ENCODE measurements at regions of chrX and their contacts with region 1.

Region 1: GRCh38 chrX:65513610-65514009 is 21.0 kb downstream of the LAS1L start:
- DNase-seq: no peak
- ATAC-seq: no peak
- H3K4me3 ChIP-seq: no peak overlapping the region
- H3K27ac ChIP-seq: no peak overlapping the region
- H3K4me1 ChIP-seq: no peaks in the 10 kb centered on the region
- CTCF ChIP-seq: no peak
- EP300 ChIP-seq: no peak
- POLR2A ChIP-seq: no peak
- RAD21 ChIP-seq: no peak

Region 2: GRCh38 chrX:65463550-65463949 is 50.1 kb before region 1 on chrX:
- CTCF ChIA-PET with region 1: no interaction called
- POLR2A ChIA-PET with region 1: no interaction called
- DNase-seq: no peak
- ATAC-seq: no peak
- H3K4me3 ChIP-seq: no peak overlapping the region
- H3K27ac ChIP-seq: no peak overlapping the region
- H3K4me1 ChIP-seq: no peaks in the 10 kb centered on the region
- CTCF ChIP-seq: no peak
- EP300 ChIP-seq: no peak
- POLR2A ChIP-seq: no peak
- RAD21 ChIP-seq: no peak

Region 3: DNA sequence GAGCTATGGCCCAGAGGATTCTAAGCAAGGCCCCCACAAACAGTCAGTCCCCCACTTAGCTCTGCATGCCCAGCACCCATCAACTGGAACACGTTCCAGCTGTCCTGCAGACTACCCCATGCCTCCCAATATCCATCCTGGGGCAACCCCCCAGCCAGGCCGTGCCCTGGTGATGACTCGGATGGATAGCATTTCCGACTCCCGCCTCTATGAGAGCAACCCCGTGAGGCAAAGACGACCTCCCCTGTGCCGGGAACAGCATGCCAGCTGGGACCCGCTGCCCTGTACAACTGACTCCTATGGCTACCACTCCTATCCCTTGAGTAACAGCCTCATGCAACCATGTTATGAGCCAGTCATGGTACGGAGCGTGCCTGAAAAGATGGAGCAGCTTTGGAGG is 11.0 kb before region 1 on chrX:
- CTCF ChIA-PET with region 1: no interaction called
- POLR2A ChIA-PET with region 1: no interaction called
- DNase-seq: no peak
- ATAC-seq: no peak
- H3K4me3 ChIP-seq: no peak overlapping the region
- H3K27ac ChIP-seq: no peak overlapping the region
- H3K4me1 ChIP-seq: no peaks in the 10 kb centered on the region
- CTCF ChIP-seq: no peak
- EP300 ChIP-seq: no peak
- POLR2A ChIP-seq: no peak
- RAD21 ChIP-seq: no peak

Region 4: GRCh38 chrX:65528705-65529340 is 15.2 kb after region 1 on chrX:
- CTCF ChIA-PET with region 1: interaction called, 10 read pairs
- POLR2A ChIA-PET with region 1: no interaction called
- DNase-seq: peak; percentile 25 to 75
- ATAC-seq: peak; percentile 83 to 86
- H3K4me3 ChIP-seq: no peak overlapping the region
- H3K27ac ChIP-seq: no peak overlapping the region
- H3K4me1 ChIP-seq: peaks cover 8% of the 10 kb centered on the region; the same call in 1 of the 3 replicates
- CTCF ChIP-seq: peak; percentile 71
- EP300 ChIP-seq: no peak
- POLR2A ChIP-seq: no peak
- RAD21 ChIP-seq: peak; percentile 46 to 54; a peak in 4 of 5 replicates

Measured in A549 (cell line).